ENCODE measurements at regions of chr5 and their contacts with region 1.

Region 1: DNA sequence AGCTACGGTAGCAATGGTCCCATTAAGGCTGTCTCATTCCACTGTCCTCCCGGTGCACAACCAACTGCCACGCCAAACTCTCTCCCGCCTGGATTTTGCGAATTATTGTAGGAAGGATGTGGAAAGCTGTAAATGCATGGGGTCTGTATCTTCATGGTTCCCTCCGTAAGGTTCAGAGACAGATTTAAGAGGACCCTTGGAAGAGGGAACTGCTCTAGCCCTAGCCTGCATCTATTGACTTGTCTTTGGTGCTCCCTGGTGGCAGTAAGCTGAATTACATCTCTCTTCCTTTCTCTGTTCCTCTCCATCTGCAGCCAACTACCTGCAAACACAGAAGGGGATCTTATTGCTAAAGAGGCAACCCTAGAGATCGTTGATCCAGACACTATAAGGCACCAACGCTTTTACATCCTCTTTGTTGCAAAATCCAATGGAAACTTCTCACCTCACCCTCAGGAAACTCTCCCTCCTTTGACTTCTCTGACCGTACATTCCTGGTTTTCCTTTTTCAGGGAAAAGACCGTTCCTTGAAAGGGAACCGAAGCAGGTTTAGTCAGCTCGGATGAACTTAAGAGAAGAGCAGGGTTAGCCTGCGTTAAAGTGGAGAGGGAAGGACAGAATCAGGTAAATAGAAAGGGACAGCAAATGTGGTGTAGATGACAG is 11.9 kb downstream of the CAPSL start:
- DNase-seq: peak; percentile 26 to 74 (median 66)
- H3K4me3 ChIP-seq: no peak overlapping the region
- H3K4me3 Mint-ChIP-seq: peak overlapping the region in 6 of 7 donors; percentile 52 to 76 (median 66)
- H3K27ac ChIP-seq: no peak overlapping the region
- H3K27ac Mint-ChIP-seq: peak overlapping the region in 2 of 8 donors; percentile 27 to 95
- H3K4me1 ChIP-seq: peaks cover 22% of the 10 kb centered on the region
- H3K4me1 Mint-ChIP-seq: peaks cover 24 to 44% (median 39%) of the 10 kb centered on the region in 3 donors
- H3K27me3 ChIP-seq: no peaks in the 10 kb centered on the region
- H3K27me3 Mint-ChIP-seq: peaks cover 1 to 16% of the 10 kb centered on the region in 2 donors

Region 2: DNA sequence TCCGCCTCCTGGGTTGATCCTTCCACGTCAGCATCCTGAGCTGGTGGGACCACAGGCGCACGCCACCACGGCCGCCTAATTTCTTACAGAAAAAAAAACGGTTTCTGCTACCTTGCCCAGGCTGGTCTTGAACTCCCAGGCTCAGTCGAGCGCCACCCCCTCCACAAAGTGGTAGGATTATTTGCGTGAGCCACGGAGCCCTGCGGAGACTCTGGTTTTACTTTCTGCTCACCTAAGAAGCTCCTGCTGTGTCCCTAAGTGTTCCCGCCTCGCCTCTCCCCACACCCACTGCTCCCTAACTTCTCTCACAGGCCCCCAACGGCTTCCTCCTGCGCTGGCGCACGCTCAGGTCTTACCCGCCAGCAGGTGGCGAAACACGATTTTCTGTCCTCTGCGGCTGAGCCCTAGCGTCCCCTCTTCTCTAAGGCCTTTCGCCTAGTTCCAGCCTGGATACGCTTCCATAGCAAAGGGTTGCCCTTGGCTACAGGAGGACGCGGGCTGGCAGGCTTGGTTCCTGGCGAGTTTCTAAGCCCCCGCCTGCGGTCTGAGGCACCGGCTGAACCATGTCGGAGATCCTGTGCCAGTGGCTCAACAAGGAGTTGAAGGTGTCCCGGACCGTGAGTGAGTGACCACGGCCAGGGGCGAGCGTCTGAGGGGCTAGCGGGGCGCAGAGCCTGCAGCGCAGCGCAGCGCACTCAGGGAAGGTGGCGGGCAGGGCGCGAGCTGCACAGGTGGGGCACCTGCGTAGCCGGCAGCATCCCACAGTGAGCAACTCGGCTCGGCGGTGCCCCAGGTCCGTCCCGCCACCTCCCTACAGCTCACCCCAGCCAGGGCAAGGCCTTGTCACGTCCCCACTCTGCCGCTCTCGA is 308.9 kb before region 1 on chr5 and contains the start of gene SPEF2:
- CTCF ChIA-PET with region 1: interaction called, 45 read pairs
- POLR2A ChIA-PET with region 1: interaction called, 5 read pairs
- DNase-seq: peak; percentile 53 to 84 (median 76)
- H3K4me3 ChIP-seq: peak within 1 kb of the TSS; percentile 88
- H3K4me3 Mint-ChIP-seq: peak within 1 kb of the TSS; percentile 85 to 97 (median 95)
- H3K27ac ChIP-seq: peak within 1 kb of the TSS; percentile 58
- H3K27ac Mint-ChIP-seq: peak within 1 kb of the TSS; percentile 79 to 100 (median 98)
- H3K4me1 ChIP-seq: peaks cover 6% of the 10 kb centered on the region
- H3K4me1 Mint-ChIP-seq: peaks cover 22 to 40% (median 30%) of the 10 kb centered on the region in 3 donors
- H3K27me3 ChIP-seq: no peaks in the 10 kb centered on the region
- H3K27me3 Mint-ChIP-seq: peaks cover 0 to 3% of the 10 kb centered on the region in 2 donors
- total RNA-seq, gene SPEF2: 5.3 to 6.8 TPM

Region 3: GRCh38 chr5:35651002-35651756 is 275.3 kb before region 1 on chr5:
- CTCF ChIA-PET with region 1: interaction called, 203 read pairs
- POLR2A ChIA-PET with region 1: no interaction called
- DNase-seq: peak; percentile 9 to 73 (median 53)
- H3K4me3 ChIP-seq: no peak overlapping the region
- H3K4me3 Mint-ChIP-seq: no peak overlapping the region
- H3K27ac ChIP-seq: no peak overlapping the region
- H3K27ac Mint-ChIP-seq: peak overlapping the region in 7 of 8 donors; percentile 38 to 92 (median 67)
- H3K4me1 ChIP-seq: peaks cover 4% of the 10 kb centered on the region
- H3K4me1 Mint-ChIP-seq: peaks cover 0 to 21% (median 2%) of the 10 kb centered on the region in 3 donors
- H3K27me3 ChIP-seq: no peaks in the 10 kb centered on the region
- H3K27me3 Mint-ChIP-seq: no peaks in the 10 kb centered on the region

Region 4: GRCh38 chr5:35852084-35852734 is 74.3 kb before region 1 on chr5:
- CTCF ChIA-PET with region 1: interaction called, 26 read pairs
- POLR2A ChIA-PET with region 1: no interaction called
- DNase-seq: peak in 3 of 5 donors; percentile 57 to 70 (median 68)
- H3K4me3 ChIP-seq: peak overlapping the region; percentile 58
- H3K4me3 Mint-ChIP-seq: peak overlapping the region; percentile 90 to 97 (median 93)
- H3K27ac ChIP-seq: peak overlapping the region; percentile 95
- H3K27ac Mint-ChIP-seq: peak overlapping the region; percentile 94 to 100 (median 100)
- H3K4me1 ChIP-seq: peaks cover 59% of the 10 kb centered on the region
- H3K4me1 Mint-ChIP-seq: peaks cover 70 to 83% (median 72%) of the 10 kb centered on the region in 3 donors
- H3K27me3 ChIP-seq: no peaks in the 10 kb centered on the region
- H3K27me3 Mint-ChIP-seq: peaks cover 0 to 1% of the 10 kb centered on the region in 2 donors

Region 5: DNA sequence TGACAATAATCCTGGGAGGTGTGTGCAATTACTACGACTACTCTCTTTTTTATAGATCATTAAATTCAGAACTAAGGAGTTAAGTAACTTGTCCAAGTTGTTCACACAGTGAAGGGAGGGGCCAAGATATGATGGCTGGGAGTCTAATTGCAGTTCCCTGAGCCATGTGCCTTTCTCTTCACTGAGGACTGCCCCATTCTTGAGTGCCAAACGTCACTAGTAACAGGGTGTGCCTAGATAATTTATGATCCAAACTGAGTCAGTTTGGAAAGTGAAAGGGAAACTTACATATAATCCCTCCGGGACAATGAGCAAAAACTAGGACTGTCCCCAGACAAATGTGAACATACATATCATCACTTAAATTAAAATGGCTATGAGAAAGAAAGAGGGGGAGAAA is 49.6 kb before region 1 on chr5:
- CTCF ChIA-PET with region 1: interaction called, 23 read pairs
- POLR2A ChIA-PET with region 1: interaction called, 5 read pairs
- DNase-seq: no peak
- H3K4me3 ChIP-seq: no peak overlapping the region
- H3K4me3 Mint-ChIP-seq: peak overlapping the region in 4 of 7 donors; percentile 9 to 57 (median 19)
- H3K27ac ChIP-seq: no peak overlapping the region
- H3K27ac Mint-ChIP-seq: peak overlapping the region; percentile 61 to 91 (median 79)
- H3K4me1 ChIP-seq: peaks cover 62% of the 10 kb centered on the region
- H3K4me1 Mint-ChIP-seq: peaks cover 76 to 96% (median 93%) of the 10 kb centered on the region in 3 donors
- H3K27me3 ChIP-seq: no peaks in the 10 kb centered on the region
- H3K27me3 Mint-ChIP-seq: no peaks in the 10 kb centered on the region